OCI-LY7 (cell line): ENCODE measurements at regions of chr6 and their contacts with region 1.

Region 1: DNA sequence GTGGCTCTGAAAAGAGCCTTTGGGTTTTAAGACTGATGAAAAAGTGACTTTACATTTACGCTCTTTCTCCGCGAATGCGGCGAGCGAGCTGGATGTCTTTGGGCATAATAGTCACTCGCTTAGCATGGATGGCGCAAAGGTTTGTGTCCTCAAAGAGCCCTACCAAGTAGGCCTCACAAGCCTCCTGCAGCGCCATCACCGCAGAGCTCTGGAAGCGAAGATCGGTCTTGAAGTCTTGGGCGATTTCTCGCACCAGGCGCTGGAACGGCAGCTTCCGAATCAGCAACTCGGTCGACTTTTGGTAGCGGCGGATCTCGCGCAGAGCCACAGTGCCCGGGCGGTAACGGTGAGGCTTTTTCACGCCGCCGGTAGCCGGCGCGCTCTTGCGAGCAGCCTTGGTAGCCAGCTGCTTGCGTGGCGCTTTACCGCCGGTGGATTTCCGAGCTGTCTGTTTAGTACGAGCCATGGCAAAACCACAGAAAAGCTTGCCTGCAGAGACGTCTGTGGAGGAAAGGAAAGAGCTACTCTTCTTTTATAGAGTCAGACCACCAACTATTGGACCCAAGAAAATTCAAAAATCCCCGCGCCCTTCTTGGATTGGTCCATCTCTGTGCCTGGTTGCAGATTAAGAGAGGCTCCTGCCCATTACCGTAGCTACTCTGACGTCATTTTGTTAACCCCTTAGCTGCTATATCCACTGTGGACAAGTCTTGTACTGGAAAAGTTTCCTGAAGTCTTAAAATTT is 55.5 kb upstream of the HFE start:
- DNase-seq: peak; percentile 99
- H3K4me3 ChIP-seq: peak overlapping the region; percentile 78
- H3K27ac ChIP-seq: peak overlapping the region; percentile 99
- H3K4me1 ChIP-seq: peaks cover 74% of the 10 kb centered on the region
- CTCF ChIP-seq: 0 out of 2 replicates have a peak, but pooled peaks have one; percentile 33

Region 2: GRCh38 chr6:25953733-25954132 is 78.0 kb before region 1 on chr6:
- CTCF ChIA-PET with region 1: no interaction called
- POLR2A ChIA-PET with region 1: no interaction called
- intact Hi-C with region 1: no loop called
- DNase-seq: no peak
- H3K4me3 ChIP-seq: no peak overlapping the region
- H3K27ac ChIP-seq: no peak overlapping the region
- H3K4me1 ChIP-seq: no peaks in the 10 kb centered on the region
- CTCF ChIP-seq: no peak

Region 3: GRCh38 chr6:26045065-26045927 is 13.5 kb after region 1 on chr6:
- CTCF ChIA-PET with region 1: interaction called, 6 read pairs
- POLR2A ChIA-PET with region 1: interaction called, 793 read pairs
- intact Hi-C with region 1: loop called (anchors 1 kb)
- DNase-seq: peak; percentile 97
- H3K4me3 ChIP-seq: peak overlapping the region; percentile 67
- H3K27ac ChIP-seq: peak overlapping the region; percentile 99
- H3K4me1 ChIP-seq: peaks cover 66% of the 10 kb centered on the region
- CTCF ChIP-seq: peak; percentile 54

Region 4: GRCh38 chr6:26103770-26104456 is 72.1 kb after region 1 on chr6:
- CTCF ChIA-PET with region 1: no interaction called
- POLR2A ChIA-PET with region 1: interaction called, 24 read pairs
- intact Hi-C with region 1: loop called (anchors 2 kb)
- DNase-seq: peak; percentile 94
- H3K4me3 ChIP-seq: peak overlapping the region; percentile 66
- H3K27ac ChIP-seq: peak overlapping the region; percentile 96
- H3K4me1 ChIP-seq: peaks cover 25% of the 10 kb centered on the region
- CTCF ChIP-seq: peak; percentile 65

Region 5: GRCh38 chr6:26204332-26205165 is 172.8 kb after region 1 on chr6:
- CTCF ChIA-PET with region 1: no interaction called
- POLR2A ChIA-PET with region 1: interaction called, 246 read pairs
- intact Hi-C with region 1: loop called (anchors 1 kb)
- DNase-seq: peak; percentile 98
- H3K4me3 ChIP-seq: peak overlapping the region; percentile 79
- H3K27ac ChIP-seq: peak overlapping the region; percentile 93
- H3K4me1 ChIP-seq: peaks cover 63% of the 10 kb centered on the region
- CTCF ChIP-seq: peak; percentile 61

Region 6: GRCh38 chr6:27138837-27139755 is 1107.3 kb after region 1 on chr6:
- CTCF ChIA-PET with region 1: interaction called, 3 read pairs
- POLR2A ChIA-PET with region 1: interaction called, 68 read pairs
- intact Hi-C with region 1: no loop called
- DNase-seq: peak; percentile 95
- H3K4me3 ChIP-seq: peak overlapping the region; percentile 77
- H3K27ac ChIP-seq: peak overlapping the region; percentile 99
- H3K4me1 ChIP-seq: peaks cover 78% of the 10 kb centered on the region
- CTCF ChIP-seq: no peak

Region 7: DNA sequence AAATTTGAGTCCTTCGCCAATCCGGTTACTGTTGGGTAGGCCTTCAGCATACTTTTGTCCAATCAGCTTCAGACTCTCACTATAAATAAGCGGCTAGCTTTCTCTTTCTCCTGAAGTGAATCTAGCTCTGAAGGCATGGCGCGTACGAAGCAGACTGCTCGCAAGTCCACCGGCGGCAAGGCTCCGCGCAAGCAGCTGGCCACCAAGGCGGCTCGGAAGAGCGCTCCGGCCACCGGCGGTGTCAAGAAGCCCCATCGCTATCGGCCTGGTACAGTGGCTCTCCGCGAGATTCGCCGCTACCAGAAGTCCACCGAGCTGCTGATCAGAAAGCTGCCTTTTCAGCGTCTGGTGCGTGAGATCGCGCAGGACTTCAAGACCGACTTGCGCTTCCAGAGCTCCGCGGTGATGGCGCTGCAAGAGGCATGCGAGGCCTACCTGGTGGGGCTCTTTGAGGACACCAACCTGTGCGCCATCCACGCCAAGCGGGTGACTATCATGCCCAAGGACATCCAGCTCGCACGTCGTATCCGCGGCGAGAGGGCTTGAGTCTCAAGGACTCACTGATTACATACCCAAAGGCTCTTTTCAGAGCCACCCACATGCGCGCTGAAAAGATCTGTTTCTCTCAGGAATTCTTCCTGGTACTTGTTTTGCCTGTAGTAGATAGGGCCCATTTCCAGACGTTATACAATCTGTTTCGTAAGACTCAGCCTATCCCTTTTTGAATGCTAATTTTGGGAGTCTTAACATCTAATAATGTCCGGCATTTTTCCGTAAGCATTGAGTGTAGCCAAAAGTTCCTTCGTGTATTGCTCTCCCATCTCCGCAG is 1778.4 kb after region 1 on chr6:
- CTCF ChIA-PET with region 1: no interaction called
- POLR2A ChIA-PET with region 1: interaction called, 164 read pairs
- intact Hi-C with region 1: loop called (anchors 1 kb)
- DNase-seq: peak; percentile 96
- H3K4me3 ChIP-seq: peak overlapping the region; percentile 82
- H3K27ac ChIP-seq: peak overlapping the region; percentile 96
- H3K4me1 ChIP-seq: peaks cover 62% of the 10 kb centered on the region
- CTCF ChIP-seq: peak; percentile 12; the same call in 1 of the 2 replicates

Region 8: GRCh38 chr6:27864906-27865849 is 1833.4 kb after region 1 on chr6:
- CTCF ChIA-PET with region 1: no interaction called
- POLR2A ChIA-PET with region 1: interaction called, 341 read pairs
- intact Hi-C with region 1: loop called (anchors 2 kb)
- DNase-seq: peak; percentile 99
- H3K4me3 ChIP-seq: peak overlapping the region; percentile 67
- H3K27ac ChIP-seq: peak overlapping the region; percentile 99
- H3K4me1 ChIP-seq: peaks cover 60% of the 10 kb centered on the region
- CTCF ChIP-seq: no peak